ENCODE measurements at regions of chr10 and their contacts with region 1.

Region 1: GRCh38 chr10:101569838-101570766 is 18.0 kb downstream of the POLL start:
- DNase-seq: peak; percentile 98
- H3K4me3 ChIP-seq: peak overlapping the region; percentile 66 to 70
- H3K27ac ChIP-seq: peak overlapping the region in 1 of 2 experiments; percentile 56; a peak in 1 of 4 replicates
- H3K4me1 ChIP-seq: peaks cover 0 to 29% of the 10 kb centered on the region in 2 experiments; a peak in 1 of 4 replicates
- H3K27me3 ChIP-seq: no peaks in the 10 kb centered on the region; the same call in 1 of the 2 replicates
- CTCF ChIP-seq: peak; percentile 69
- EP300 ChIP-seq: no peak
- RAD21 ChIP-seq: peak; percentile 76

Region 2: GRCh38 chr10:101207026-101207425 is 363.1 kb before region 1 on chr10:
- CTCF ChIA-PET with region 1: interaction called, 29 read pairs
- POLR2A ChIA-PET with region 1: no interaction called
- DNase-seq: no peak
- H3K4me3 ChIP-seq: no peak overlapping the region
- H3K27ac ChIP-seq: no peak overlapping the region
- H3K4me1 ChIP-seq: no peaks in the 10 kb centered on the region
- H3K27me3 ChIP-seq: peaks cover 71% of the 10 kb centered on the region
- CTCF ChIP-seq: no peak
- EP300 ChIP-seq: no peak
- RAD21 ChIP-seq: no peak

Region 3: DNA sequence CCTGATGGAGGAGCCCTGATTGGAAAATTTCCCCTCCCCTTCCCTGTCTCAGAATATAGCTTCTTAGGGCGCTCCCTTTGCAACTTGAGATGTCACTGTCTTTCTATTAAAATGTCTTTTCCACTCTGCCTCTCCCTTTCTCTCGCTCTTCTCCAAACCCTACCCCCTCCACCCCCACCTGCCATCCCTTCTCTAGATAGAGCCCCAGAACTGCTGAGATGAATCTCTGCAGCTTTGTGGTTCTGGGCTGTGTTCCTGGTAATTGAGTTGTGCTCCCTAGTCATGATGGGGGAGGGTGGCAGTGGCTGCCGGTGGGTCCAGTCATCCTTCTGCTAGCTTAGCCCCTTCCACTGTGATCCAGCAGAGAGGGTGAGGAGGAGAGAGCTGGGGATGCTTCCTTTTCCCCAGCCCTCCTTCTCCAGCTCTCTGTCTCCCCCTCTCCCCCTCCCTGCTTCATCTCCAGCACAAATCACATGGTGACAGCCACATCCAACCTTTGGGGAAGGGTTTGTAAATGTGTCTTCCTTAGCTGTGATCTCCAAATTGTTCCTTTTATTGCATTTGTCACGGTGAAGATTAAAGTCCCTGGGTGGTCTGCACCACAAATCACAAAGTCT is 266.9 kb before region 1 on chr10:
- CTCF ChIA-PET with region 1: interaction called, 10 read pairs
- POLR2A ChIA-PET with region 1: no interaction called
- DNase-seq: no peak
- H3K4me3 ChIP-seq: no peak overlapping the region
- H3K27ac ChIP-seq: no peak overlapping the region
- H3K4me1 ChIP-seq: peaks cover 0 to 13% of the 10 kb centered on the region in 2 experiments; a peak in 1 of 4 replicates
- H3K27me3 ChIP-seq: peaks cover 38% of the 10 kb centered on the region; the same call in 1 of the 2 replicates
- CTCF ChIP-seq: no peak
- EP300 ChIP-seq: no peak
- RAD21 ChIP-seq: no peak

Region 4: GRCh38 chr10:101467286-101467770 is 102.8 kb before region 1 on chr10:
- CTCF ChIA-PET with region 1: interaction called, 40 read pairs
- POLR2A ChIA-PET with region 1: interaction called, 3 read pairs
- DNase-seq: peak; percentile 52
- H3K4me3 ChIP-seq: no peak overlapping the region; a peak in 1 of 4 replicates
- H3K27ac ChIP-seq: no peak overlapping the region; a peak in 1 of 4 replicates
- H3K4me1 ChIP-seq: peaks cover 0 to 13% of the 10 kb centered on the region in 2 experiments; a peak in 2 of 4 replicates
- H3K27me3 ChIP-seq: no peaks in the 10 kb centered on the region
- CTCF ChIP-seq: peak; percentile 91
- EP300 ChIP-seq: no peak
- RAD21 ChIP-seq: peak; percentile 80

Region 5: GRCh38 chr10:101536800-101537199 is 33.3 kb before region 1 on chr10:
- CTCF ChIA-PET with region 1: interaction called, 11 read pairs
- POLR2A ChIA-PET with region 1: no interaction called
- DNase-seq: peak; percentile 54
- H3K4me3 ChIP-seq: no peak overlapping the region
- H3K27ac ChIP-seq: no peak overlapping the region
- H3K4me1 ChIP-seq: no peaks in the 10 kb centered on the region
- H3K27me3 ChIP-seq: no peaks in the 10 kb centered on the region
- CTCF ChIP-seq: peak; percentile 68
- EP300 ChIP-seq: no peak
- RAD21 ChIP-seq: peak; percentile 53

Region 6: GRCh38 chr10:101587725-101588653 is 17.9 kb after region 1 on chr10 and contains the starts of genes DPCD and POLL:
- CTCF ChIA-PET with region 1: interaction called, 88 read pairs
- POLR2A ChIA-PET with region 1: interaction called, 4 read pairs
- DNase-seq: peak; percentile 97
- H3K4me3 ChIP-seq: peak within 1 kb of the TSS; percentile 92 to 94
- H3K27ac ChIP-seq: peak within 1 kb of the TSS; percentile 17 to 76; a peak in 2 of 4 replicates
- H3K4me1 ChIP-seq: peaks cover 13 to 26% of the 10 kb centered on the region in 2 experiments; a peak in 2 of 4 replicates
- H3K27me3 ChIP-seq: no peaks in the 10 kb centered on the region
- CTCF ChIP-seq: no peak
- EP300 ChIP-seq: no peak
- RAD21 ChIP-seq: no peak
- polyA plus RNA-seq, gene DPCD: 106 and 121 TPM in 2 replicates
- polyA plus RNA-seq, gene POLL: 22.0 and 27.3 TPM in 2 replicates

Region 7: DNA sequence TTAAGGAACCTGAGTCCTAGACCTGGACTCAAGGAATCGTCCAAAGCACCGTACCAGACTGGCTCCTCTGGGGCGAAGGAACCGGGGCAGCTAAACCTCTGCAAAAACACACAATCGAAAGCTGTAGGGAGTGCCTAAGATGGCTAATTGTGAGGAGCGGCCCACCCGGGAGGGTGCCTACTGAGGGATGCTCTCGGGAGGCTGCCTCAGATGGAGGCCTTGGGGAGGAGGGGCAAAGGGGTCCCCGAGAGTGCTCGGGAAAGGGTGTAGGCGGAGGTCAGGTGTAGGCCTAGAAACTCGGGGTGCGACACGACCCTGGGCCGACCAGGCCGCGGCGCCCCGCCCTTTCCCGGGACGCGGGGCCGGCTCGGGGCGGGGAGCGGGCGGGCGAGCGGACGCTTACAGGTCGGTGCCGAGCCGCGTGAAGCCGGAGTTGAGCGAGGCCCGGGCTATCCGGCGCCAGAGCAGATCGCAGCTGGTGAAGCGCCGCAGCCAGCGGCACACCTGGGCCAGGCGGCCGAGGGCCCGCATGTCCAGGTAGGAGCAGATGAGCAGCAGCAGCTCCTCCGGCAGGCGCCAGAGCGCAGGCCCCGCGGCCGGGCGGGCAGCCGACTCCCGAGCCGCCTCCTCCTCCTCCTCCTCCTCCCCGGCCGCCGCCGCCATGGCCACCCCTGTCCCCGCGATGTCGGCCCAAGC is 124.0 kb after region 1 on chr10:
- CTCF ChIA-PET with region 1: no interaction called
- POLR2A ChIA-PET with region 1: no interaction called
- DNase-seq: peak; percentile 84
- H3K4me3 ChIP-seq: peak overlapping the region; percentile 59 to 84
- H3K27ac ChIP-seq: peak overlapping the region; percentile 83 to 94
- H3K4me1 ChIP-seq: peaks cover 16 to 25% of the 10 kb centered on the region in 2 experiments
- H3K27me3 ChIP-seq: no peaks in the 10 kb centered on the region
- CTCF ChIP-seq: no peak
- EP300 ChIP-seq: no peak
- RAD21 ChIP-seq: no peak